Ovary (tissue), 10 donors: ENCODE measurements at regions of chr4 and their contacts with region 1.

Region 1: GRCh38 chr4:169167958-169168858 is 102.5 kb downstream of the SH3RF1 start:
- DNase-seq: no peak
- H3K4me3 ChIP-seq: no peak overlapping the region
- H3K27ac ChIP-seq: no peak overlapping the region
- H3K4me1 ChIP-seq: peaks cover 1% of the 10 kb centered on the region
- H3K27me3 ChIP-seq: no peaks in the 10 kb centered on the region
- CTCF ChIP-seq: no peak
- EP300 ChIP-seq: no peak
- POLR2A ChIP-seq: no peak

Region 2: GRCh38 chr4:167956676-167957075 is 1211.5 kb before region 1 on chr4:
- intact Hi-C with region 1: no loop called
- DNase-seq: no peak
- H3K4me3 ChIP-seq: no peak overlapping the region
- H3K27ac ChIP-seq: no peak overlapping the region
- H3K4me1 ChIP-seq: no peaks in the 10 kb centered on the region
- H3K27me3 ChIP-seq: no peaks in the 10 kb centered on the region
- CTCF ChIP-seq: no peak
- EP300 ChIP-seq: no peak
- POLR2A ChIP-seq: no peak

Region 3: GRCh38 chr4:169096221-169096620 is 72.0 kb before region 1 on chr4:
- intact Hi-C with region 1: loop called in 1 of 4 experiments (anchors 2 kb)
- DNase-seq: no peak
- H3K4me3 ChIP-seq: no peak overlapping the region
- H3K27ac ChIP-seq: no peak overlapping the region
- H3K4me1 ChIP-seq: peaks cover 9% of the 10 kb centered on the region
- H3K27me3 ChIP-seq: no peaks in the 10 kb centered on the region
- CTCF ChIP-seq: no peak
- EP300 ChIP-seq: no peak
- POLR2A ChIP-seq: no peak

Region 4: DNA sequence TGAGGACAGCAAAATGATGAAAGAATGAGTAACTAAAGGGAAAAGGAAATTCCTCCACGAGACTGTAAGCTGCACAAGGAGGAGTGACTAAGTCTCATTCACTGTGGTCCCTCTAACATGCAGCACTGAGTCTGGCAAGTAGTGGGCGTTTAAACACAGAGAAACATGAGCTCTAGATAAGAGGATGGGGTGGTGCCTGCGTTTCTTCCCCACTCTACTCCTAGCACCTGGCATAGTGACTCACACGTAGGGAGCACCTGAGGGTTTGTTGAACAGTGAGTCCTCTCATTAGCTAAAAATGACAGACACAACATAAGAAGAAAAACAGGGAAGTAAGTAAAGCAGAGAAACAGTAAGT is 52.3 kb before region 1 on chr4:
- intact Hi-C with region 1: no loop called
- DNase-seq: no peak
- H3K4me3 ChIP-seq: no peak overlapping the region
- H3K27ac ChIP-seq: no peak overlapping the region
- H3K4me1 ChIP-seq: no peaks in the 10 kb centered on the region
- H3K27me3 ChIP-seq: no peaks in the 10 kb centered on the region
- CTCF ChIP-seq: no peak
- EP300 ChIP-seq: no peak
- POLR2A ChIP-seq: no peak

Region 5: DNA sequence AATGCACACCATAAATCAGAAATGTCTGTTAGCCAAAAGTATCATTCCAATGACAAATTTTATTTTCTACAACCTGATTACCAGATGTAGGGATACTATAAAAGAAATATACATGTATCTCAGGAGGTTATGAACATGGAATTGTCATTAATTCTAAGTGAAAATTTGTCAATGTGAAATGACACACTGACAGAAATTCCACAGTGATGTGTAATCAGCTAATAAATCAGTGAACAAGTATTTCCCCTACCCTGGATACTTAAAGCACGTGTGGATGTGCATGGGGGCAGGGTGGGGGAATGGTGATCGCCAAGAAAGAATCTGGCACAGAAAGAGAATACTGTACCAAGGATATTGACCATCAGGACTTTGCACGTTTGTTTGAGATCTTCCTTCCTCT is 21.0 kb before region 1 on chr4:
- intact Hi-C with region 1: no loop called
- DNase-seq: no peak
- H3K4me3 ChIP-seq: no peak overlapping the region
- H3K27ac ChIP-seq: no peak overlapping the region
- H3K4me1 ChIP-seq: no peaks in the 10 kb centered on the region
- H3K27me3 ChIP-seq: no peaks in the 10 kb centered on the region
- CTCF ChIP-seq: no peak
- EP300 ChIP-seq: no peak
- POLR2A ChIP-seq: no peak